Ovary (tissue), 10 donors: ENCODE measurements at regions of chr2 and their contacts with region 1.

Region 1: GRCh38 chr2:218322895-218323808 is 30.8 kb upstream of the TMBIM1 start:
- DNase-seq: peak; percentile 70 to 83 (median 81)
- H3K4me3 ChIP-seq: peak overlapping the region; percentile 57
- H3K27ac ChIP-seq: peak overlapping the region; percentile 81 to 89
- H3K4me1 ChIP-seq: peaks cover 9% of the 10 kb centered on the region
- H3K27me3 ChIP-seq: no peaks in the 10 kb centered on the region
- CTCF ChIP-seq: no peak
- EP300 ChIP-seq: no peak
- POLR2A ChIP-seq: peak; percentile 1

Region 2: DNA sequence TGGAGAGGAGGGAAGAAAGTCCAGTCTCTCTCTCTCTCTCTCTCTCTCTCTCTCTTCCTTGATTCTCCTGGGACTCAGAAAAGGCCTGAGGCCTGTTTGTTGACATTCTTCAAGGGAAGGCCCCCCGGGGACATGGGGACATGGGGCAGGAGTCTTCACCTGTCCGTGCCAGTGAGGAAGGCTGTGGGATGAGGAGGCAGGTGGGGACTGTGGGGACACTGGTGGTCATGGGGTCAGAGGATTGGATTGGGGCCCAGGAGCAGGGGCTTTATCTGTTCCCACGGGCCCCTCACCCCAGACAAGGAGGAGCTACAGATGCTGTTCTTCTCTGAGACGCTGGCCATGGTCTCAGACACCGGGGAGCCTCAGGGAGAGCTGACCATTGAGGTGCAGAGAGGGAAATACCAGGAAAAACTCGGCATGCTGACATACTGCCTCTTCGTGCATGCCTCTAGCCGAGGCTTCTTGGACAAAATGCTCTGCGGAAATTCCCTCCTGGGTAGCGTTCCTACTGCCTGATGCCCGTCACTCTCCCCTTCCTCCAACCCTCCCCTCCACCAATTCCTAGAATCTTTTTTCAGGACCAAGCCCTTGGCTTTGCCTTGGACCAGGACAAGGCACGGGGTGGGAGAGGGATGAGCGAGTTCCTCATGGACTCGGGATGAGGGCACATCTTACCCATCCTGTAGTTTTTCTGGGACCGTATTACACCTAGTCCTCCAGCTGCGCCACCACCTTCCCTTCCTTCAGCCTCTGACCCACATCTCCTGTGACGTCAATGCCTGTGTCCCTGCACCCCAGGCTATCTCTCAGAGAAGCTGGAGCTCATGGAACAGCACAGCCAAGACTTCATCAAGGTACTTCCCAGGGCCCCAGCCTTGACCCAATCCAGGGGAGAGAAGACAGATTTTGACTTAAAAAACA is 34.3 kb after region 1 on chr2:
- intact Hi-C with region 1: loop called in 1 of 4 experiments (anchors 5 kb)
- DNase-seq: no peak
- H3K4me3 ChIP-seq: no peak overlapping the region
- H3K27ac ChIP-seq: no peak overlapping the region
- H3K4me1 ChIP-seq: peaks cover 1% of the 10 kb centered on the region
- H3K27me3 ChIP-seq: no peaks in the 10 kb centered on the region
- CTCF ChIP-seq: no peak
- EP300 ChIP-seq: no peak
- POLR2A ChIP-seq: no peak